Lower leg skin (tissue), 4 donors: ENCODE measurements at regions of chr2 and their contacts with region 1.

Region 1: GRCh38 chr2:9739531-9739964 is 103.7 kb upstream of the TAF1B start:
- DNase-seq: peak; percentile 49 to 92
- H3K4me3 ChIP-seq: no peak overlapping the region
- CTCF ChIP-seq: no peak
- POLR2A ChIP-seq: no peak

Region 2: DNA sequence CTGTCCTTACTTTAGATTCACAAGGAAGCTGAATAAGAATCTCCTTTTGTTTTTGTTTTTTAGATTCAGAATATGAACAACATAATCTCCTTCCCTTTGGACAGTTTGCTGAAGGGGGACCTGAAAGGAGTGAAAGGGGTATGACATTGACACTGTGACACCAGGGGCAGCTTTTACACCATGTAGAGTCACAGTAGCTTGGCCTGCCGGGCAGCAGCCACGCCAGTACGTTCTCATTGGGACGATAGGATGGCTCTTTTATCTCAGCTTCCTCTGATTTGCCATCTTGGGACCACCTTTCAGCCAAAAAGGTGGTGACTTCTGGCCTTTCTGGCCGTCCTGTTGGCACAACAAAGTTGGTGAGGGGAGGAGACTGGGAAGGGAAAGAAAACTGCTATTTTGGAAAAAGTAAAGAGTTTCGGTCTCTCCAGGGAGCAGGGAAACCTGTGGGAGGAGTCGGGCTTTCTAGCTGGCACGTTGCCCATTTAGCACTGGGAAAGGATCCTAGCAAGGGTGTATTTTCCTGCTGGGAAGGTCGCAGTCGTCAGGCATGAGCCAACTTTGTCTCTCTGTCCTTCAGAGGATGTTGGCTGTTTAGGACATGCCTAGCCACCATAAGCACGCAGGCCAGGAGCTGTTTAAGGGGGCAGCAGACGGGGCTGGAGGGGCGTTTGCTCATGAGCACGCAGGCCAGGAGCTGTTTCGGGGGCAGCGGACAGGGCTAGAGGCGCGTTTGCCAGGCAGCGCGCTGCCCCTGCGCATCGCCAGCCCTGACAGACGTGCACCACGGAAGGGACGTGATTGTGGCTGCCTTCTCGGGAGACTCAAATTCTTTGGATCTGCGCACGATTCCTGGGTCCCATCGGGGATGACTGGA is 420.8 kb before region 1 on chr2:
- intact Hi-C with region 1: no loop called
- DNase-seq: peak in 1 of 2 donors; percentile 86
- H3K4me3 ChIP-seq: no peak overlapping the region
- CTCF ChIP-seq: no peak
- POLR2A ChIP-seq: no peak

Region 3: GRCh38 chr2:9356292-9356691 is 383.3 kb before region 1 on chr2:
- intact Hi-C with region 1: loop called (anchors 10 kb)
- DNase-seq: no peak
- H3K4me3 ChIP-seq: no peak overlapping the region
- CTCF ChIP-seq: no peak
- POLR2A ChIP-seq: no peak